ENCODE measurements at regions of chr11 and their contacts with region 1.

Region 1: GRCh38 chr11:118051611-118052461 is 25.0 kb upstream of the TMPRSS4 start:
- DNase-seq: peak; percentile 38
- ATAC-seq: peak; percentile 87
- H3K4me3 ChIP-seq: no peak overlapping the region
- H3K4me3 Mint-ChIP-seq: peak overlapping the region; percentile 42
- H3K27ac ChIP-seq: peak overlapping the region in 1 of 2 donors; percentile 35
- H3K27ac Mint-ChIP-seq: peak overlapping the region; percentile 88
- H3K4me1 ChIP-seq: peaks cover 32 to 34% of the 10 kb centered on the region in 2 donors
- H3K4me1 Mint-ChIP-seq: peaks cover 39% of the 10 kb centered on the region
- H3K27me3 ChIP-seq: no peaks in the 10 kb centered on the region
- H3K27me3 Mint-ChIP-seq: peaks cover 8% of the 10 kb centered on the region
- CTCF ChIP-seq: no peak

Region 2: DNA sequence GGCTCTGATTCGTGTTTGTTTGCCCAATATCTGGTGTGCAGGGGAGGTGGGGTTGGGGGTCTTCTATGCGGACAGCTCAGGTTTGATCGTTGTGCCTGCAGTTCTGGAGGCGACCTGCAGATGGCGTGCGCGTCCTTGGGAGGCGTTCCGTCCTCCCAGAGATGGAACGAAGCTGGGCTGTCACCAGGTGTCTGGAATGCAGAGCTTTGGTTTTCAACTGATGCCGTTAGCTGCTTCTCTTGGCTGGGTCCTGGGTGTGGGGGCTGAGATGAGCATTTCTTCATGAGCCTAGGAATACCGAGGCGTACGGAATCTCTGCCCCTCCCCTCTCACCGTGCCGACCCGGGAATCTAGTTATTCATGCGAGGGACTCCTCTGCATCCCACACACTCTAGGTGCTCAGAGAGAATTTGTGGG is 625.6 kb before region 1 on chr11:
- CTCF ChIA-PET with region 1: interaction called, 17 read pairs
- POLR2A ChIA-PET with region 1: interaction called, 3 read pairs
- intact Hi-C with region 1: no loop called
- DNase-seq: peak; percentile 65
- ATAC-seq: peak; percentile 49
- H3K4me3 ChIP-seq: no peak overlapping the region
- H3K4me3 Mint-ChIP-seq: no peak overlapping the region
- H3K27ac ChIP-seq: no peak overlapping the region
- H3K27ac Mint-ChIP-seq: peak overlapping the region; percentile 37
- H3K4me1 ChIP-seq: peaks cover 0 to 8% of the 10 kb centered on the region in 2 donors
- H3K4me1 Mint-ChIP-seq: peaks cover 8% of the 10 kb centered on the region
- H3K27me3 ChIP-seq: peaks cover 0 to 13% (median 0%) of the 10 kb centered on the region in 4 experiments
- H3K27me3 Mint-ChIP-seq: peaks cover 5% of the 10 kb centered on the region
- CTCF ChIP-seq: peak; percentile 97

Region 3: DNA sequence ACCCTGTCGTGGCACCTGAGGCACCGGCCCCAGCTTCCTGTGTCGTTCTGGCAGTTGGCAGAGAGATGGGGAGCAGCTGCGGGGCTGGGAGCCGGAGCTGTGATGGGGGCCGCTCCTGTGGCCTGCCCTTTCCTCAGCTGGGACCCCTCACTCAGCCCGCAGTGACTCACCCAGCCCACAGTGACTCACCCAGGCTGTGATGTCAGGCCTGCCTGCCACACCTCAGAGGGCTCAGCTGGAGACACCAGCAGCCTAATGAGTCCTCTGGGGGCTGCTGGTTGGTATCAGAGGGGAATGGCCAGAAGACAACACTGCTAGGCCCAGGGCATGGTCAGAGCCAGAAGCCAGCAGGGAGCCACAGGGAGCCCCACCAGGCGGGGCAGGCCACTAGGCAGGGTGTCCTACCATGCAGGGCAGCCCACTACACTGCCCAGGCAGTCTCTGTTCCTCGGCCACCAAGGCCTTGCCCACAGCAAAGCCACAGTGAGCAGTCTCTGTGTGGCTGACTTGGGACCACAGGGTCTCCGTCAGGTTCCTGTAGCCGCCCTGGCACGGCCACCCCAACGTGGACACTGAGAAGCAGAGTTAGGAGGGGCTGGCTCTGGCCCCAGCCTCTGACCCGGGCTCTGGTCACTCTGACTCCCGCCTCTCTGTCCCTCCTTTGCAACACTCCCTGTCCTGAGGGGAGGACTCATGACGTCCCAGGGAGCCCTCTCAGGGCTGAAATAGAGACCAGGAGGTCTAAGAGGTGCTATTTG is 223.0 kb before region 1 on chr11:
- CTCF ChIA-PET with region 1: interaction called, 136 read pairs
- POLR2A ChIA-PET with region 1: no interaction called
- intact Hi-C with region 1: no loop called
- DNase-seq: peak; percentile 51
- ATAC-seq: peak; percentile 91
- H3K4me3 ChIP-seq: no peak overlapping the region
- H3K4me3 Mint-ChIP-seq: peak overlapping the region; percentile 57
- H3K27ac ChIP-seq: no peak overlapping the region
- H3K27ac Mint-ChIP-seq: peak overlapping the region; percentile 78
- H3K4me1 ChIP-seq: peaks cover 30 to 33% of the 10 kb centered on the region in 2 donors
- H3K4me1 Mint-ChIP-seq: peaks cover 38% of the 10 kb centered on the region
- H3K27me3 ChIP-seq: peaks cover 0 to 52% (median 9%) of the 10 kb centered on the region in 4 experiments
- H3K27me3 Mint-ChIP-seq: peaks cover 35% of the 10 kb centered on the region
- CTCF ChIP-seq: no peak

Region 4: GRCh38 chr11:117851106-117851505 is 200.7 kb before region 1 on chr11:
- CTCF ChIA-PET with region 1: interaction called, 227 read pairs
- POLR2A ChIA-PET with region 1: no interaction called
- intact Hi-C with region 1: no loop called
- DNase-seq: no peak
- ATAC-seq: no peak
- H3K4me3 ChIP-seq: no peak overlapping the region
- H3K4me3 Mint-ChIP-seq: no peak overlapping the region
- H3K27ac ChIP-seq: no peak overlapping the region
- H3K27ac Mint-ChIP-seq: no peak overlapping the region
- H3K4me1 ChIP-seq: no peaks in the 10 kb centered on the region
- H3K4me1 Mint-ChIP-seq: no peaks in the 10 kb centered on the region
- H3K27me3 ChIP-seq: peaks cover 0 to 24% (median 7%) of the 10 kb centered on the region in 4 experiments
- H3K27me3 Mint-ChIP-seq: peaks cover 44% of the 10 kb centered on the region
- CTCF ChIP-seq: no peak

Region 5: GRCh38 chr11:117946842-117947526 is 104.9 kb before region 1 on chr11:
- CTCF ChIA-PET with region 1: interaction called, 495 read pairs
- POLR2A ChIA-PET with region 1: interaction called, 47 read pairs
- intact Hi-C with region 1: loop called (anchors 1 kb)
- DNase-seq: peak; percentile 83
- ATAC-seq: peak; percentile 32
- H3K4me3 ChIP-seq: no peak overlapping the region
- H3K4me3 Mint-ChIP-seq: no peak overlapping the region
- H3K27ac ChIP-seq: no peak overlapping the region
- H3K27ac Mint-ChIP-seq: peak overlapping the region; percentile 60
- H3K4me1 ChIP-seq: peaks cover 33 to 46% of the 10 kb centered on the region in 2 donors
- H3K4me1 Mint-ChIP-seq: peaks cover 38% of the 10 kb centered on the region
- H3K27me3 ChIP-seq: no peaks in the 10 kb centered on the region
- H3K27me3 Mint-ChIP-seq: peaks cover 9% of the 10 kb centered on the region
- CTCF ChIP-seq: peak; percentile 98

Region 6: DNA sequence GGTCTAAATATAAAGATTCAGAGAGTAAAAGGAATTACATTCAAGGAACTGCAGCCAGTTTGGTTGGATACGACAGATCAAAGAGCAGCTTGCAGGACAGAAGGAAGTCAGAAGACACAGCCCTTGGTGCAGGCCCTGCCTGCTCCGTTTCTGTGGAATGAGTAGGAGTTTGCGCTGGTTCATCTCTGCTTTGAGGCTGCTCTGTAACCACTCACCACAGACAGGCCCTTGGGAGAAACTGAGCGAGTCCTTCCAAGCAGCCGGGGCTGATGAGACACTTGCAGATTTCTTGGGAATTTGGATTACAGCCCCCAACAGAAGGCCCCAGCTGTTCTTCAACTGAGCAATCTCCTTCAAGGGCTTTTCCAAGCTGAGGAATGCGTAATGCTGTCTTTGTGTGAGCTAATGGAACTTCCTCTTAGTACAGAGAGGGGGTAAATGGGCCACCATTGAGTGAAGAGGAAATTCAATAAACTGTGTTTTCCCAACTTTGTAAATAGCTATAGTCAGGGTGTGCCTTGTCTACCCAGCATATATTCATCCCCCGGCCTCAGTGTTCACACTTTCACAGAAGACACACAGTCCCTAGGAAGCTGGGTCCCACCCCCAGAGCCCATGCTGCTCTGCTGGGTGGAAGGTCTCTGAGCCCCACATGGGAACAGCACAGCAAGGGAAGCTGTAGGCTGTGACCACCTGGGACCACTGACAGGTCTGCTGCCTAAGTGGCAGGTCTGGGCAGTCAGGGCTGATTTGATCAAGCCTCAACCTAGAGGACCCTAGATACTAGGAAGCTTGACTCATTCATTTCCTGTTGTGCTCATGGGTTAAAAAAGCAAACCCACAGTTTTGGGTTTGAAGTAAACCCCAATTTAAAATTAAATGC is 49.1 kb before region 1 on chr11:
- CTCF ChIA-PET with region 1: interaction called, 134 read pairs
- POLR2A ChIA-PET with region 1: interaction called, 54 read pairs
- intact Hi-C with region 1: no loop called
- DNase-seq: peak; percentile 52
- ATAC-seq: peak; percentile 14
- H3K4me3 ChIP-seq: no peak overlapping the region
- H3K4me3 Mint-ChIP-seq: peak overlapping the region; percentile 56
- H3K27ac ChIP-seq: peak overlapping the region; percentile 64 to 99
- H3K27ac Mint-ChIP-seq: peak overlapping the region; percentile 99
- H3K4me1 ChIP-seq: peaks cover 67 to 76% of the 10 kb centered on the region in 2 donors
- H3K4me1 Mint-ChIP-seq: peaks cover 84% of the 10 kb centered on the region
- H3K27me3 ChIP-seq: no peaks in the 10 kb centered on the region
- H3K27me3 Mint-ChIP-seq: no peaks in the 10 kb centered on the region
- CTCF ChIP-seq: no peak

Region 7: GRCh38 chr11:118171269-118172062 is 119.6 kb after region 1 on chr11:
- CTCF ChIA-PET with region 1: interaction called, 17 read pairs
- POLR2A ChIA-PET with region 1: no interaction called
- intact Hi-C with region 1: no loop called
- DNase-seq: peak; percentile 77
- ATAC-seq: peak; percentile 88
- H3K4me3 ChIP-seq: no peak overlapping the region
- H3K4me3 Mint-ChIP-seq: no peak overlapping the region
- H3K27ac ChIP-seq: no peak overlapping the region
- H3K27ac Mint-ChIP-seq: no peak overlapping the region
- H3K4me1 ChIP-seq: peaks cover 0 to 5% of the 10 kb centered on the region in 2 donors
- H3K4me1 Mint-ChIP-seq: peaks cover 3% of the 10 kb centered on the region
- H3K27me3 ChIP-seq: peaks cover 0 to 15% (median 1%) of the 10 kb centered on the region in 4 experiments
- H3K27me3 Mint-ChIP-seq: peaks cover 46% of the 10 kb centered on the region
- CTCF ChIP-seq: peak; percentile 96

Region 8: DNA sequence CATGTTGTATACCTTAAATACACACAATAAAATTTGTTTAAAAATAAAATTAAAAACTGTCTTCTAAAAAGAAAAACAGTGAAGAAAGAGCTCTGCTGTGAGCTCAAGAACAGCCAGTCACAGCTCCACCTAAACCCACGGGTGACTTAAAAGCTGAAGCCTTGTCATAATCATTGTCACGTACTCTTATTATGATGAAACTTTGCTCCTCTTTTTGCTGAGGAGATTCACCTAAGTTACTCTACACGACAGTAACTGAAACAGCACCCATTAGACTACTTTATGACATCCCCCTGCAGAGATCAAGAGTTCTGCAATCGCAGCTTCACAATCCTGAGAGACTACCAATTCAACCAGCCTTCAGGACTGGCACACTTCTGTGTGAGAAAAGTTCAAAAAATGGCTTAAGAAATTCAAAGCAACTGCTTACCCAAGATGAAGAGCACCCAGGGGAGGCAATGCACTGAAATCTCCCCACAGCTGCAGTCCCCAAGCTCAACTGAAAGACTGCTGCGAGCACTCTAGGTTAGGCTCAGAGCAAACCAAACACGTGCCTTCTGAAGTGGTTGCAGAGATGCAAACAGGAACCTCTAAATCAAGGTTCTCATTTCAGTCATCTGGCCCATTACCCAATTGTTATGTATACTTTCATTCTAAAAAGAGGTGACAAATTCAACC is 172.8 kb after region 1 on chr11 and contains the start of gene JAML:
- CTCF ChIA-PET with region 1: no interaction called
- POLR2A ChIA-PET with region 1: no interaction called
- intact Hi-C with region 1: no loop called
- DNase-seq: peak; percentile 56
- ATAC-seq: peak; percentile 69
- H3K4me3 ChIP-seq: peak within 1 kb of the TSS in 1 of 5 experiments; percentile 88
- H3K4me3 Mint-ChIP-seq: peak within 1 kb of the TSS; percentile 76
- H3K27ac ChIP-seq: no peak within 1 kb of the TSS
- H3K27ac Mint-ChIP-seq: peak within 1 kb of the TSS; percentile 4
- H3K4me1 ChIP-seq: peaks cover 60% of the 10 kb centered on the region in 2 donors
- H3K4me1 Mint-ChIP-seq: peaks cover 55% of the 10 kb centered on the region
- H3K27me3 ChIP-seq: peaks cover 0 to 32% (median 26%) of the 10 kb centered on the region in 4 experiments
- H3K27me3 Mint-ChIP-seq: peaks cover 34% of the 10 kb centered on the region
- CTCF ChIP-seq: no peak
- total RNA-seq, gene JAML: 9.6 and 9.7 TPM in 2 replicates